AG04449 (cell line): ENCODE measurements at regions of chr3 and their contacts with region 1.

Region 1: GRCh38 chr3:186259612-186260383 is 102.2 kb downstream of the DGKG start:
- DNase-seq: peak; percentile 36
- H3K4me3 ChIP-seq: no peak overlapping the region
- CTCF ChIP-seq: peak; percentile 86

Region 2: DNA sequence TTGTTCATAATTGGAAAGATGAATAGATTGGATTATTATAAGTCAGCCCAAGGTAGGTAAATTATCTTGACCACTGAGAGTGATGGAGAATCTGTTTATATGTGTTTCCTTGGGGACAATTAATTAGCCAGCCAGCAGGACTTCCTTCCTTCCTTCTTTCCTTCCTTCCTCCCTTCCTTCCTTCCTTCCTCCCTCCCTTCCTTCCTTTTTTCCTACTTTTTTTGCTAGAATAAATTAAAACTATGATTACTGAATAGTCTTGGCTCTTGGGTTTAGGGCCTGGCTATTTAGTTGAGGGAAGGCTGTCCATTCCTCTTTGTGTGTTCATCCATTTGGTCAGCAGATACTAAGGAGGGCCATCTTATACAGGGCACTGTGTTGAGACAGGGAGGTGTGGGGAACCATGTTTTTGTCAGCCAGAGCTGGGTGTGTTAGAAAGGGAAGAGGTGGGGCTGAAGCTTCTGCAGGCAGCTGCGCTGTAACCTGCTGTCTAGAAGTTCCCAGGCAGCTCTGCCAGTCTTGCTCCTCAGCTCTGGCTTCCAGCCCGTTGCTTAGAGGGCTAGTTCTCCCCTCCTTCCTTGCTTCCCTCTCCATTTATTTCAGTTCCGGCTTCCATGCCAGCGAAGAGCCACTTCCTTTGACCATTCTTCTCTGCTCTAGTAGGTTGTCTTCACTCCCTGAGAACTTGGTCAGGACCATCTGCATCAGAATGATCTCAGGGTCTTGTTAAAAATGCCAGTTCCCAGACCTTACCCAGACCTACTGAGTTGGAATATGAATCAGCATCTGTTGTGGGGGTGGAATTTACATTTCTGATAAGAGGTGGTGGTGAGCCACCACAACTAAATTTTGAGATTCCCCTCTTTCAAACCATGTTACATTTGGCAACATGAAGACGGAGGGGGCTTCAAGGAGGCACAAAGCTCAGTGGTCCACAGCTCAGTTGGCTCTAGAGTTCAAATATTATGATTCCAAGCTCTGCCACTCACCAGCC is 11.7 kb before region 1 on chr3:
- CTCF ChIA-PET with region 1: interaction called, 13 read pairs
- POLR2A ChIA-PET with region 1: no interaction called
- DNase-seq: no peak
- H3K4me3 ChIP-seq: no peak overlapping the region
- CTCF ChIP-seq: no peak

Region 3: GRCh38 chr3:186287711-186288110 is 27.9 kb after region 1 on chr3:
- CTCF ChIA-PET with region 1: no interaction called
- POLR2A ChIA-PET with region 1: no interaction called
- DNase-seq: peak; percentile 90
- H3K4me3 ChIP-seq: no peak overlapping the region
- CTCF ChIP-seq: no peak

Region 4: DNA sequence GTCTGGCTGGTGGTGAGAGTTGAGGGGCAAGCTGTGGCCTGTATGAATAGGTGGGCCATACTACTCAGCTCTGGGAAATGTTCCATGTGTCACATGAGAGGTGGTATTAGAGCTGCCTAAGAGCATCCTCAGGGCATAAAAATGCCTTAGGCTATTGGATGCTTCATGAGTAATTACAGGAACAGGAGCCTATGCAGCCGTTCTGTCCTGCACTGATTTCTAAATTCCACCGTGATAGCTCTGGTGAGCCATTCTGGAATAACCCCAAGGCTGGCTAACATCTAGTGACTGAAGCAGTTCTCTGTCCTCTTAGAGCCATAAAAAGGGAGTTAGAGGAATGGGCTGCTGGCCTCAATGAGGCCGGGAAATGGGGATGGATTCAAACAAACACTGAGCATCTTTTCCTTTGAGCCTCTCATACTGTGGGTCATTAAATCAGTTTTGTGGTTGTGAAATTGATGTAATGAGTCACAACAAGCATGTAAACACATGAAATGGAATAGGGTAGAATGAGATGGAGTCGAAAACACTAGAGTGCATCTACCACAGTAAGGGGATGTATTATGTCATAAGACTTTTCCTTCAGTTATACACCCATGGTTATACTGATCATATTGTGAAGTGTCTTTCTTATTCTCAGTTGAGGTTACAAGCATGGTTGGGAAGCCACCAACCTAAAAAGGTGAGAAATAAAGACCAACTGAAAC is 61.2 kb after region 1 on chr3:
- CTCF ChIA-PET with region 1: no interaction called
- POLR2A ChIA-PET with region 1: no interaction called
- DNase-seq: no peak
- H3K4me3 ChIP-seq: no peak overlapping the region
- CTCF ChIP-seq: no peak